ENCODE measurements at regions of chr9 and their contacts with region 1.

Region 1: DNA sequence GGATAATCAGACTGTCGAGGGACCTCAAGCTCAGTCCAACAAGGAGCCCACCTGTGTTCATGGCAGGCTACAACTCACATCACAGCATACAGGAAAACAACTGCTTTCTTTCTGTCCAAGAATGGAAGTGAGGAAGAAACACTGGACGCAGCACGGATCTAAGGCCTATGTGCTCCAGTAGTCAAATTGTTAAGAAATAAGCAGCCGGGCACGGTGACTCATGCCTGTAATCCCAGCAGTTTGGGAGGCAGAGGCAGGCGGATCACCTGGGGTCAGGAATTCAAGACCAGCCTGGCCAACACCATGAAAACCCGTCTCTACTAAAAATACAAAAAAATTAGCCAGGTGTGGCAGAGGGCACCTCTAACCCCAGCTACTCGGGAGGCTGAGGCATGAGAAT is 427.8 kb downstream of the BNC2 start:
- DNase-seq: peak; percentile 80
- H3K4me3 ChIP-seq: no peak overlapping the region
- H3K27ac ChIP-seq: peak overlapping the region in 3 of 4 donors; percentile 47 to 71 (median 60)
- H3K4me1 ChIP-seq: peaks cover 0 to 53% (median 30%) of the 10 kb centered on the region in 4 donors
- H3K27me3 ChIP-seq: no peaks in the 10 kb centered on the region
- CTCF ChIP-seq: no peak
- EP300 ChIP-seq: no peak
- POLR2A ChIP-seq: no peak

Region 2: GRCh38 chr9:16475257-16475656 is 32.6 kb after region 1 on chr9:
- intact Hi-C with region 1: no loop called
- DNase-seq: no peak
- H3K4me3 ChIP-seq: no peak overlapping the region
- H3K27ac ChIP-seq: no peak overlapping the region
- H3K4me1 ChIP-seq: peaks cover 0 to 15% (median 4%) of the 10 kb centered on the region in 4 donors
- H3K27me3 ChIP-seq: no peaks in the 10 kb centered on the region
- CTCF ChIP-seq: no peak
- EP300 ChIP-seq: no peak
- POLR2A ChIP-seq: no peak

Region 3: DNA sequence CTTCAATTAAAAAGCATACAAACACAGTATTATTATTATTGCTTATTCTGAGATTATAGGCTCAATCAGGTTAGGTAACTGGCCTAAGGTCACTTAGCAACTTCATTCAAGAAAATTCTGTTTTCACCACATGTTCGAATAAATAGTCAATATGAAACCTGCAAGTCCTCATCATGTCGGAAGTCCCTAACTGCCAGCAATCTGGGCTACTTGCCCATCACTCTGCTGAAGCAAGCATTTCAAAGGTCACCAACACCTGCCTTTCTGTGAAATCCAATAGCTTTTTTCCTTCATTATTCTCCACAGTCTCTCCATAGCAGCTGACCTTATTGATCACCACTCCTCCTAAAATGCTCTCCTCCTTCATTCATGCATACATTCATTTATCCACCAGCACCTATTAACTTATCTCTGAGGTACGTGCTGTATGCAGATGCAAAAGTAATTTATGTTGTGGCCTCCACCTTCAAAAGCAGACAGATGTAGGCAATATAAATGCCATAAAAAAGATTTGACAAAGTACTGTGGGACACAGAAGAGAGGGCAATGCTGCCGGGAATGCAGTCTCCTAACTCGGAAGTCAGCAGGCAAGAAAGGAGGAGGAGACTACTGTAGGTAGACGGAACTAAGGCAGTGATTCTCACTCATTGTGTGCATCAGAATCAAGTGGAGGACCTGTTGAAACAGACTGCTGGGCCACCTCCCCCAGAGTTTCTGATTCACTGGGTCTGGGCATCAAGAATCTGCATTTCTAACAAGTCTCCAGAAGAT is 117.0 kb after region 1 on chr9:
- intact Hi-C with region 1: loop called (anchors 10 kb)
- DNase-seq: no peak
- H3K4me3 ChIP-seq: no peak overlapping the region
- H3K27ac ChIP-seq: no peak overlapping the region
- H3K4me1 ChIP-seq: peaks cover 0 to 20% (median 17%) of the 10 kb centered on the region in 4 donors
- H3K27me3 ChIP-seq: no peaks in the 10 kb centered on the region
- CTCF ChIP-seq: no peak
- EP300 ChIP-seq: no peak
- POLR2A ChIP-seq: no peak

Measured in sigmoid colon (tissue), 7 donors.